Right cardiac atrium (tissue), 5 donors: ENCODE measurements at regions of chr12 and their contacts with region 1.

Region 1: DNA sequence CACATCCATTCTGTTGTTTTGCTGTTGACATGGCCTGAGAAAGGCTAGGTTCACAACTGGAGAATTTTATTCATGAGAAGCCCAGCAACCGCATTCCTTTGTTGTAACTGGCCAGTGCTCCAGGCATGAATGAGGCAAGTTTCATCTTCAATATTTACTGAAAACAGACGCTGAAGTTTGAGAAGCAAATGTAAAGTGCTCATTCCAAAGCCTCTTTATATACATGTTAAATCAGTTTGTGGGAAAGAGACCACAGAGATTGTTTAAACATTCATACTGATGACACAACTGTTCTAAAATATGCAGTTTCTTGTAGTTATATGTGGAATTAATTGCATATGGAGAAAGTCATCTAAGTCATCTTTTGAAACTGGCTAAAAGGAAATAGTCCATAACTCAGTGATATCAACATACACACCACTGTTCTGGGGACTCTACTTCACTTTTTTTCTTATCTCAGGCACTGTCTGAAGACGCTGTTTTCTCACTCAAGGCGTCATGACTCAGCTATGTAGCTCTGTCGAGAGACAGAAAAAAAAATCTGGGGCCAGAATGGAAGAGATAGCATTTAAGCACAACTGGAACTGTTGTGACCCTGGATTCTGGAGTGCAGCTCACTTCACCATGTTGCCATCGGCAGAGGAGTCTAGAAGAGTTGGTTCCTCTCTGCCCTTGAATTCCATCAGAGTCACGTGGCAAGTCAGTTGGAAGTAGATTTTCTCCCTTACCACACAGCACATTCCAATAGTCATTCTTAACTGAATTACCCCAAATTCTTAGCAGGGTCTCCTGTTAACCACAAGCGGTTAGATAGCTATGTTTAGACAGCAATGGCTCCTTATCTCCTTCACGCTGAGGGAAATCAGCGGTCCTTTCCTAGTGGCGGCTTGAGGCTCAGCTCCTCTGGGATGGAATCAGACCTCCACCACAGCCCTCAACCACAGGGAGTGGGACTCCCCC is 258.4 kb upstream of the HMGA2 start:
- DNase-seq: no peak
- ATAC-seq: peak; percentile 42 to 57
- H3K4me3 ChIP-seq: no peak overlapping the region
- H3K27ac ChIP-seq: peak overlapping the region; percentile 13
- H3K4me1 ChIP-seq: peaks cover 9% of the 10 kb centered on the region
- H3K27me3 ChIP-seq: no peaks in the 10 kb centered on the region

Region 2: DNA sequence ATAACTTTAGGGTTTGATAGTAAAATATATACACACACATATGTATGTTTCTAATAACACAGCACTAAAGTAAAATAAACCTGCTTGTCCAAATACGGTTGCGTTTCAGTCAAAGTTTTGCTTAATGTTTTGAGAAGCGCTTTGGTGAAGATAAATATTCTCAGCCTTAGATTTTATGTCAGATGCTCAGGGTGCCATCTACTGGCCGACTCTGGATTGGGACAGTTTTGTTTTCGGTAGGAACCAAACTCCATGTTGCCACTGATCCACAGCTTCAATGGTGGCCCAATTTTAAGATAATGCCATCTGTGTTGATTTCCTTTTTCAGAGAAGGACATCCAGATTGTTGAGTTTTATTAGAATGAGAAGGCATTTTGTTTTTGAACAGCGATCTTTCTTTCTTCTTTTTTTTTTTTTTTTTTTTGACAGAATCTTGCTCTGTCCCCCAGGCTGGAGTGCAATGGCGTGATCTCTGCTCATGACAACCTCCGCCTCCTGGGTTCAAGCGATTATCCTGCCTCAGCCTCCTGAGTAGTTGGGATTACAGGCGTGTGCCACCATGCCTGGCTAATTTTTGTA is 521.6 kb after region 1 on chr12:
- intact Hi-C with region 1: loop called in 1 of 4 experiments (anchors 10 kb)
- DNase-seq: peak; percentile 54 to 79 (median 65)
- ATAC-seq: peak; percentile 54 to 61
- H3K4me3 ChIP-seq: no peak overlapping the region
- H3K27ac ChIP-seq: no peak overlapping the region
- H3K4me1 ChIP-seq: no peaks in the 10 kb centered on the region
- H3K27me3 ChIP-seq: no peaks in the 10 kb centered on the region